Heart left ventricle (tissue), 16 donors: ENCODE measurements at regions of chr1 and their contacts with region 1.

Region 1: DNA sequence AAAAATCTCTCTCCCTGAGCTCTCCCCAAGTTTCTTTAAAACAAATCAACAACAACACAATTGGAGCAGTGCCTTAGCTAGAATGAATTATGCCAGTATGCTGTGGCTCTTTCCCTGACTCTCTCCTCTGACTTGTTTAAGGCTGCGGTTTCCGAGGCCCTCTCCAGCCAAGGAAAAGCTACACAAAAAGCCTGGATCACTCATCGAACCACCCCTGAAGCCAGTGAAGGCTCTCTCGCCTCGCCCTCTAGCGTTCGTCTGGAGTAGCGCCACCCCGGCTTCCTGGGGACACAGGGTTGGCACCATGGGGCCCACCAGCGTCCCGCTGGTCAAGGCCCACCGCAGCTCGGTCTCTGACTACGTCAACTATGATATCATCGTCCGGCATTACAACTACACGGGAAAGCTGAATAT is 1.9 kb downstream of the S1PR1 start:
- DNase-seq: peak; percentile 88 to 93 (median 90)
- ATAC-seq: peak; percentile 37 to 73 (median 70)
- H3K4me3 ChIP-seq: peak overlapping the region; percentile 60 to 88 (median 73)
- H3K27ac ChIP-seq: peak overlapping the region; percentile 63 to 99 (median 95)
- H3K4me1 ChIP-seq: peaks cover 0 to 65% (median 35%) of the 10 kb centered on the region in 12 donors
- H3K27me3 ChIP-seq: no peaks in the 10 kb centered on the region
- CTCF ChIP-seq: peak; percentile 90 to 98 (median 94)
- POLR2A ChIP-seq: peak in 1 of 2 donors; percentile 41

Region 2: GRCh38 chr1:100921109-100921706 is 317.5 kb before region 1 on chr1:
- intact Hi-C with region 1: loop called in 4 of 10 experiments (anchors 2 to 5 kb)
- DNase-seq: no peak
- ATAC-seq: peak in 1 of 4 donors; percentile 45
- H3K4me3 ChIP-seq: no peak overlapping the region
- H3K27ac ChIP-seq: no peak overlapping the region
- H3K4me1 ChIP-seq: no peaks in the 10 kb centered on the region
- H3K27me3 ChIP-seq: no peaks in the 10 kb centered on the region
- CTCF ChIP-seq: peak; percentile 66 to 90 (median 74)
- POLR2A ChIP-seq: no peak

Region 3: DNA sequence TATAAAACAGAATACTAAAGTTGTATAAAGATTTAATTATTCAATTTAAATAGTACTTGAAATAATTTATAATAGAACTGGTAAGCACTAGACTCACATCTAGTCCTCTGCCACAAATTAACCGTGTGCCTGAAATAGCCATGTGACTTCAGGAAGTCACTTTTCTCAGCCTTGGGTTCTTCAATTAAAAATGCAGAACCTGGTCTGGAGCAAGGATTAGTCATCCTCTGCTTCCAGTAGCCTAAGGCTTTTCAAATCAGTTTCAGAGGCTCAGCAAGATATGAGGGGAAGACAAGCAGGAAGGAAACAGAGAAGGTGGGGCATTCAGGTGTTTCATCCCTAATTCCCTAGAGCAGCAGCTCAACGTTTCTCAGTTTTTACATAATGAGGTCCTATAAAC is 236.1 kb before region 1 on chr1:
- intact Hi-C with region 1: loop called in 1 of 10 experiments (anchors 5 kb)
- DNase-seq: no peak
- ATAC-seq: peak in 3 of 4 donors; percentile 63 to 81 (median 69)
- H3K4me3 ChIP-seq: no peak overlapping the region
- H3K27ac ChIP-seq: peak overlapping the region in 11 of 12 donors; percentile 6 to 76 (median 41)
- H3K4me1 ChIP-seq: peaks cover 0 to 46% (median 17%) of the 10 kb centered on the region in 12 donors
- H3K27me3 ChIP-seq: no peaks in the 10 kb centered on the region
- CTCF ChIP-seq: no peak
- POLR2A ChIP-seq: no peak

Region 4: GRCh38 chr1:101030881-101031280 is 207.8 kb before region 1 on chr1:
- intact Hi-C with region 1: loop called in 7 of 10 experiments (anchors 2 to 10 kb)
- DNase-seq: no peak
- ATAC-seq: no peak
- H3K4me3 ChIP-seq: no peak overlapping the region
- H3K27ac ChIP-seq: peak overlapping the region in 5 of 12 donors; percentile 13 to 35 (median 23)
- H3K4me1 ChIP-seq: peaks cover 0 to 38% (median 7%) of the 10 kb centered on the region in 12 donors
- H3K27me3 ChIP-seq: no peaks in the 10 kb centered on the region
- CTCF ChIP-seq: no peak
- POLR2A ChIP-seq: no peak

Region 5: DNA sequence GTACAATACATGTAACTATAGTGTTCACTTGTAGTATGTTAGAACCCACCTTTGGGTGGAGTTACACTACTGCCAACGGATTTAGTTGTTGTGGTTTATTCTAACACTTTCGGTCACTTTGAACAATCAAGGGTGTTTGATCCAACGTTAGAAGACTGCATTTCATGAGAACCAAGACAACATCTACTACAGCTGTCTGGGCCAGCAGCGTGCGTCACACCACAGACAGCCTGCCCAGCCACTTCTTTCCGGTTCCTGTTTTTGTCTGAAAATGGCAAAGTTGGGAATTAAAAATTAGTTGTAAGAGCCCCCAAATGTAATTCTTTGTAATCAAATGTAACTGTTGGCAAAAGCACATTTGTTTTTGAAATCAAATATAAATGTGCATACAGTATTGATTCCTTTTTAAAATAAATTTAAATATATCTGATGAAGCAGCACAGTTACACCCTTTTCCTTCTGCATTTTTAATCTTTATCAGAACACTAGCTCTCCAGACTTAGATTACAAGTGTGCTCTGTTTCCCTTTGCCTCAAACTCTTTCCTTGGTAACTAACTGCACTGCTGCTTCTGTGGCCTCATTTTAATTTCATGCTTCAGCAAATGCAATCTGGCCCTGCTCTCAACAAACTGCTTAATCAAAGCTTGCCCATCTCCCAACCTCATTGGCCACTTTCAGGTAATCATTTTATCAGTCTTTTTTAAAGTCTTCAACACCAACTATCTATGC is 126.5 kb before region 1 on chr1:
- intact Hi-C with region 1: loop called in 1 of 10 experiments (anchors 2 kb)
- DNase-seq: peak; percentile 58 to 66 (median 62)
- ATAC-seq: peak; percentile 79 to 95 (median 84)
- H3K4me3 ChIP-seq: no peak overlapping the region
- H3K27ac ChIP-seq: peak overlapping the region in 10 of 12 donors; percentile 46 to 82 (median 66)
- H3K4me1 ChIP-seq: peaks cover 0 to 29% (median 19%) of the 10 kb centered on the region in 12 donors
- H3K27me3 ChIP-seq: no peaks in the 10 kb centered on the region
- CTCF ChIP-seq: no peak
- POLR2A ChIP-seq: no peak

Region 6: GRCh38 chr1:101161619-101162018 is 77.1 kb before region 1 on chr1:
- intact Hi-C with region 1: loop called in 3 of 10 experiments (anchors 5 kb)
- DNase-seq: no peak
- ATAC-seq: peak; percentile 50 to 80 (median 64)
- H3K4me3 ChIP-seq: no peak overlapping the region
- H3K27ac ChIP-seq: peak overlapping the region; percentile 54 to 82 (median 74)
- H3K4me1 ChIP-seq: peaks cover 3 to 38% (median 12%) of the 10 kb centered on the region in 12 donors
- H3K27me3 ChIP-seq: no peaks in the 10 kb centered on the region
- CTCF ChIP-seq: no peak
- POLR2A ChIP-seq: no peak

Region 7: GRCh38 chr1:101282314-101283038 is 43.8 kb after region 1 on chr1:
- intact Hi-C with region 1: loop called in 4 of 10 experiments (anchors 2 to 5 kb)
- DNase-seq: no peak
- ATAC-seq: no peak
- H3K4me3 ChIP-seq: no peak overlapping the region
- H3K27ac ChIP-seq: no peak overlapping the region
- H3K4me1 ChIP-seq: peaks cover 0 to 54% (median 0%) of the 10 kb centered on the region in 12 donors
- H3K27me3 ChIP-seq: no peaks in the 10 kb centered on the region
- CTCF ChIP-seq: no peak
- POLR2A ChIP-seq: no peak